Mucosa of descending colon (tissue), 3 donors: ENCODE measurements at regions of chr6 and their contacts with region 1.

Region 1: DNA sequence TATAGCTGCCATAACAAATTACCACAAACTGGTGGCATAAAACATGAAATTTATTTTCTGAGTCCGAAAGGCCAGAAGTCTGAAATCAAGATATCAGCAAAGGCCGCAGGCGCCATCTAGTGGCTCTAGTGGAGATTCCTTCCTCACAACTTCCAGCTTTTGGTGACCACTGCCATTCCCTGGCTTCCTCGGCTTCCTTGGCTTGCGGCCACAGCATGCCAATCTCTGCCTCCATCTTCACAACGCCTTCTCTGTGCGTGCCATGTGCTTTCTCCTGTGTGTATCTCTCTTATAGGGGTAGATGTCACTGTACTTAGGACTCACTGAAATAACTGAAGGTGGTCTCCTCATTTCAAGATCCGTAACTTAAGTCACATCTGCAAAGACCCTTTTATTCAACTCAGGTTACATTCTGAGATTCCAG is 5.4 kb upstream of the PLAGL1 start:
- DNase-seq: peak; percentile 70 to 86 (median 83)
- ATAC-seq: peak; percentile 88
- H3K4me3 ChIP-seq: no peak overlapping the region
- H3K4me1 ChIP-seq: peaks cover 10% of the 10 kb centered on the region
- CTCF ChIP-seq: peak; percentile 60

Region 2: DNA sequence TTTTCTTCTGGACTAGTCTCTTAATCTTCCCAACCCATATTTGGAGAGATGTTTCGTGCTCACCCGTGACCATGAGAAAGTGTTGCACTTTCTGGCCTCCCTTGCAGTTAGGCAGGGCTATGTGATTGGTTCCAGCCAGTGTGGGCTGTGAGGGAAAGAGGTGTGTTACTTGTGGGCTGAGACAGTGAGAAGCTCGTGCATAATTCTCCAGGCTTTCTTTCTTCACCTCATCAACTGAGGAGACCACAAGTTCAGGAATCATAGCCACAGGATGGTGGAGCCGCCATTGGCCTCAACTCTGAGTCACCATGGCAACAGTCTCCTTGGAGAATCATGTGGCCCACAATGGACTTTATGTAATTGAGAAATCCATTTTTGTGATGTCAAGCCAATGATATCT is 444.5 kb before region 1 on chr6:
- intact Hi-C with region 1: loop called (anchors 5 kb)
- DNase-seq: no peak
- ATAC-seq: no peak
- H3K4me3 ChIP-seq: no peak overlapping the region
- H3K4me1 ChIP-seq: no peaks in the 10 kb centered on the region
- CTCF ChIP-seq: no peak

Region 3: DNA sequence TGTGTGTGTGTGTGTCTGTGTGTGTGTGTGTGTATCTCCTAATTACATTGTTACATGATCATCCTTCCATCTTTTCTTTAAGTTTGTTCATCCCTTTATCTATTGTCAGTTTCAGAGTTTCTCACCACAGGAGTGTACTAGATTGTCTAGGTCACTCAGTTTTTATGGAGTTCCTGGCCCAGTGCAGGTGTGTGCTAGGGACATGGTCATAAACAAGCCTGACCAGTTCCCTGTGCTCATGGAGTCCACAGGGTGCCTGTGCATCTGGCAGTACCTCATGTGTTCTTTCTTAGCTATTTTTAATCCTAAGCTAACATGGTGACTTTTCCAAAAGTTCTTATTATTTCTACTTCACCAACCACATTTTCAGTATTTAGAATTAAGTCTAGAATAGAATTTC is 291.9 kb before region 1 on chr6:
- intact Hi-C with region 1: no loop called
- DNase-seq: no peak
- ATAC-seq: peak; percentile 77
- H3K4me3 ChIP-seq: no peak overlapping the region
- H3K4me1 ChIP-seq: no peaks in the 10 kb centered on the region
- CTCF ChIP-seq: no peak

Region 4: DNA sequence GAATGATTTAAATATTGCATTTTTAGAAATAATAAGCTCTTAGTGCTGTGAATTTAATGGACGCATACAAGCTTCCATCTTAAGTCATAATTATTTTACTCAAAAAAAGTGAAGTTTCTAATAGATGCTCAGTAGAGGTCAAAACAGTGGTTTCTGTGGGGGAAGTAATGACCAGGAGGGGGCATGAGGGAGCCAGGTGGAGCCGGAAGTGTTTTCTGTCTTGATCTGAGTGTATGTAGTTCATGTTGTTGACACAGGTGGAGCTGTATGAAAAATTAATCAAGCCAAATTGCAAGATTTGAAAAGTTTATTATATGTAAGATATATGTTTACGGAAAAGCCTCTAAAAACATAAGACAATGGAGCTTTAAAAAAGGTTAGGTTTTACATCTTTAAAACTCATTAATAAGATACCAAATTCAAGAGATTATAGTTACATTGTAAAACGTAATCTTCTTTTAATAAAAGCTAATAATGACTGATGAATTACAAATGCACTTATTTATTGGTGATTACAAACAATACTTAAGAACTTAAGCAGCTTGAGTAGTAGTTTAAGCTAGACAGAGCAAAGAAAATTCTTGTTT is 73.4 kb before region 1 on chr6:
- intact Hi-C with region 1: loop called in 1 of 2 experiments (anchors 10 kb)
- DNase-seq: peak in 2 of 3 donors; percentile 52 to 79
- ATAC-seq: peak; percentile 93
- H3K4me3 ChIP-seq: no peak overlapping the region
- H3K4me1 ChIP-seq: no peaks in the 10 kb centered on the region
- CTCF ChIP-seq: peak; percentile 66